PC-9 (cell line): ENCODE measurements at regions of chr7 and their contacts with region 1.

Region 1: DNA sequence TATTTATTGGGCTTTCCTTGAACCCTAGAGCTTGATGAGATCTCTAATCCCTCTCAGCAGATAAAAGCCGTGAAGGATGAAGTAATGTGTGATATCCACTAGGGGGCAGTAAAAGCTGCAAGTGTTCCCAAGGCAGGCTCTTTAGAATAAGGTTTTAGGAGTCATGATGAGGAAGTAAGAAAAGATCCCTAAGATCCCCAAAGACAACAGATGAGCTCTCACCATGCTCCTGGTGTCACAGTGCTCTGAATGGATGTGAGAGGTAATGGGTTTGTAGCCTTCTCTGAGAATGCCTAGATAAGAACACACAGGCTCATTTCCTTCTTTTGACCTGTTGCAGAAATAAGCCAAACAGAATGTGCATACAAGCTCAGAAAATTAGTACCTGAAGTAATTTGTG is 70.4 kb upstream of the ITPRID1 start:
- DNase-seq: peak; percentile 16 to 66
- H3K4me3 ChIP-seq: no peak overlapping the region
- H3K27ac ChIP-seq: no peak overlapping the region
- H3K4me1 ChIP-seq: no peaks in the 10 kb centered on the region
- H3K27me3 ChIP-seq: 0 out of 2 replicates have a peak, but pooled peaks cover 17% of the 10 kb centered on the region
- CTCF ChIP-seq: peak; percentile 98

Region 2: DNA sequence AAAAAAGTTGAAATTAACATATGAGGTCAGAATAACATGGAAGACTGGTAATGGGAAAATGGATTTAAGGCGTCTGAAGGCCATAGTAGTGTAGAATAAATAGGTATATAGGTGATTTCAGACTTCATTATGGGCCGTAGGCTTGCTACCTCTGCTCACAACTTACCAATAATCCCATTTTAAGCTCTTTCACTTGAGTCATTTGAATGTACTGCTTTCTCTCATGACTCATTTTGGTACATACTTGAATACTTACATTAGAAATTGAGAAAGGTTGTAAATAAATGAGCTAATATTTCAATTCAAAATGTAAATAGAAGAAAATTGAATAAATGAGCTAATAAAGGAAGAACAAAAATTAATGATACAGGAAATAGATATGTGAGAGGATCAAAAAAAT is 60.7 kb before region 1 on chr7:
- CTCF ChIA-PET with region 1: no interaction called
- POLR2A ChIA-PET with region 1: no interaction called
- intact Hi-C with region 1: no loop called
- DNase-seq: no peak
- H3K4me3 ChIP-seq: no peak overlapping the region
- H3K27ac ChIP-seq: no peak overlapping the region
- H3K4me1 ChIP-seq: no peaks in the 10 kb centered on the region
- H3K27me3 ChIP-seq: peaks cover 18% of the 10 kb centered on the region; the same call in 1 of the 2 replicates
- CTCF ChIP-seq: no peak

Region 3: GRCh38 chr7:31488562-31489203 is 45.2 kb after region 1 on chr7:
- CTCF ChIA-PET with region 1: no interaction called
- POLR2A ChIA-PET with region 1: no interaction called
- intact Hi-C with region 1: loop called (anchors 2 kb)
- DNase-seq: peak in 1 of 2 experiments; percentile 59
- H3K4me3 ChIP-seq: no peak overlapping the region
- H3K27ac ChIP-seq: no peak overlapping the region
- H3K4me1 ChIP-seq: no peaks in the 10 kb centered on the region
- H3K27me3 ChIP-seq: peaks cover 15% of the 10 kb centered on the region
- CTCF ChIP-seq: peak; percentile 91

Region 4: DNA sequence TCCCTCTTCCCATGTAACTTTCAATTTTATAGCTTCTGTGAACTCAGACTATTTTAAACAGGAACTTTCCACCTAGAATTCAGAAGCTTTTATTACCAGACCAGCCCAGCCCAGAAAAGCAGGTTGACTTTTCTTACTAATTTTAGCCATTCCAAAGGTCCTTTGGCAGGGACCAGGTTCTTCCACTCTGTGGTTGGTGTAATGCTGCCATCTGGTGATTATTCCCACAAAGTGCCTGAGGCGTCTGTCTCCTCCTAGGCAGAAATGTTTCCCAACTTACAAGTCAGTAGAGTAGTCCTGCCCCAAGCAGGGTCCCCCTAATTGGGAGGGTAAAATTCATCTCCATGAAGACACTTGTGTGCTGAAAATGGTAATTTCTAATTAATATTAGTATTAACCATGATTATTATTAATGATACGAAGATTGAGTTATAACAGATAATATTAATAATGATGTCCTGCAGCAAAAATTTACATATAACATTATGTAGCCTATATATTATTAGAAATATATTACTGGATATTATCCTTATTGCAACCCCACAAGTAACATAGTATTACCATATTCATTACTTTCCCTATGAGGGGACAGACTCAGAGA is 190.5 kb after region 1 on chr7:
- CTCF ChIA-PET with region 1: interaction called, 3 read pairs
- POLR2A ChIA-PET with region 1: no interaction called
- intact Hi-C with region 1: loop called (anchors 1 kb)
- DNase-seq: peak; percentile 50 to 53
- H3K4me3 ChIP-seq: no peak overlapping the region
- H3K27ac ChIP-seq: no peak overlapping the region
- H3K4me1 ChIP-seq: no peaks in the 10 kb centered on the region
- H3K27me3 ChIP-seq: peaks cover 23% of the 10 kb centered on the region
- CTCF ChIP-seq: peak; percentile 74

Region 5: DNA sequence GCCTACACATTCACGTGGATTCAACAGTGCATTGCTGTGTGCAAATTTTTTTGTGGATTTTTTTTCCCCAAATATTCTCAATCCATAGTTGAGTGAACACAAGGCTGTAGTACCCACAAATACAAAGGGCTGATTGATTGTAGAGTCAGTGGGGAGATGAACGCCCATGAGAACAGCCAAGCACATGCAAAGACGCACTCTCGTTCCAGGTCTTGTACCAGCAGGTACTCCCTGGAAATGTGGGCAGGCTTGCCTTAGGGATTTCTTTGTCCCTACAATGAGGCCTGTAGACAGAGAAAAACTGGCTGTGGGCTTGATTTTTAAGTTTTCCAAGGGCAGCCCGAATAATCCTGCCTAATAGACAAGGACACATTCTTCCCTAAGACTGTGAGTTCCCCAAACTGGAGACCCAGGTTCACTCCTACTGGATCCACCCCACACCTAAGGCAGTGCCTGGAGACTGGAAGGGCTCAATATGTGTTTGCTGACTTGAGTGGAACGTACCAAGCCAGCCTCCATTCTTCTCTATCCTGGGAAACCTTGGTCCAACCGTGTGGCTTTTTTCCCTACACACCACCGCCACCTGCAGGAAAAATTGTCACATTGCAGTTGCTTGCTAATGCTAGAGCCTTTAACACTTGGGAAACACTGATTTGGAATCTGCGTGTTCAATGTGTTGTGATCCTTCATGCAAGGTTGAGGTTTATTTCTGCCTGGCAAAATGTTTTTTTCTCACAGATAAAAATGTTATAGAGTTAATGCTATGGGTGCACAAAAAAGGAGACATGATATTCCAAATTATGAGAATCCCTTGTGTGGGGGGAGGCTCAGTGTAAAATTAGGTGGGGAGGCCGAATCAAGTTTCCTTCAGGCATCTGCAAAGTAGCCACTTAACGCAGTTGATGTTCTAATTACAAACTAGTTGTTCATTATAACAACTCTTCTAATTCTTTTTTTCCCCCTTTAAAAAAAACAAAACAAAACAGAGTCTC is 292.8 kb after region 1 on chr7:
- CTCF ChIA-PET with region 1: no interaction called
- POLR2A ChIA-PET with region 1: no interaction called
- intact Hi-C with region 1: loop called (anchors 10 kb)
- DNase-seq: peak; percentile 42 to 51
- H3K4me3 ChIP-seq: no peak overlapping the region
- H3K27ac ChIP-seq: no peak overlapping the region
- H3K4me1 ChIP-seq: no peaks in the 10 kb centered on the region
- H3K27me3 ChIP-seq: peaks cover 44% of the 10 kb centered on the region
- CTCF ChIP-seq: peak; percentile 95

Region 6: GRCh38 chr7:32093415-32094408 is 650.3 kb after region 1 on chr7:
- CTCF ChIA-PET with region 1: no interaction called
- POLR2A ChIA-PET with region 1: no interaction called
- intact Hi-C with region 1: no loop called
- DNase-seq: no peak
- H3K4me3 ChIP-seq: no peak overlapping the region
- H3K27ac ChIP-seq: no peak overlapping the region
- H3K4me1 ChIP-seq: no peaks in the 10 kb centered on the region
- H3K27me3 ChIP-seq: no peaks in the 10 kb centered on the region
- CTCF ChIP-seq: no peak